Activated naive CD4-positive, alpha-beta T cell treated with anti-CD3 and anti-CD28 coated beads for 36 hours (primary cell): ENCODE measurements at regions of chr3 and their contacts with region 1.

Region 1: GRCh38 chr3:100796556-100796955 is 87.3 kb downstream of the TFG start:
- DNase-seq: no peak
- H3K4me3 Mint-ChIP-seq: peak overlapping the region; percentile 27
- H3K27ac Mint-ChIP-seq: no peak overlapping the region
- H3K4me1 Mint-ChIP-seq: peaks cover 5% of the 10 kb centered on the region
- H3K27me3 Mint-ChIP-seq: no peaks in the 10 kb centered on the region

Region 2: GRCh38 chr3:100463002-100463401 is 333.6 kb before region 1 on chr3:
- CTCF ChIA-PET with region 1: interaction called, 15 read pairs
- intact Hi-C with region 1: loop called (anchors 1 kb)
- DNase-seq: peak; percentile 27
- H3K4me3 Mint-ChIP-seq: no peak overlapping the region
- H3K27ac Mint-ChIP-seq: no peak overlapping the region
- H3K4me1 Mint-ChIP-seq: peaks cover 5% of the 10 kb centered on the region
- H3K27me3 Mint-ChIP-seq: peaks cover 3% of the 10 kb centered on the region

Region 3: DNA sequence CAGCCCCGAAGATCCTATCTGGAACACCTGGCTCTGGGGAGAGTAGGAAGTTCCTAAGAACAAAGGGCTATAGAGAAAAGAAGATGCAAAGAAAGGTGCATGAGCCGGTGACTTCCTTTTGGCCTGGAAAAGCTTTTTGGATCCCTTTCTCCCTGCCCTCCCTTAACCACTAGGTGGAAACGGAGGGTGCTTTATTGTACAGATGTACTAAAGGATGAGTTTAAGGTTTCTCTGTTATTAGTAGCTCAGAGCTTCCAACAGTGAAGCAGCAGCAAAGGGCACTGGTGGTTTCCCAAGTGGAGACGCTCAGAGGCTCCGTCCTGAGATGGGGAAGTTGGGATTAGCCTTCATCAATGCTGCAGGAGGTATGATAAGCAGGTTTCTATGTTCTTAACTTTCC is 193.1 kb before region 1 on chr3:
- CTCF ChIA-PET with region 1: interaction called, 4 read pairs
- intact Hi-C with region 1: loop called (anchors 2 kb)
- DNase-seq: no peak
- H3K4me3 Mint-ChIP-seq: peak overlapping the region; percentile 37
- H3K27ac Mint-ChIP-seq: no peak overlapping the region
- H3K4me1 Mint-ChIP-seq: peaks cover 25% of the 10 kb centered on the region
- H3K27me3 Mint-ChIP-seq: peaks cover 2% of the 10 kb centered on the region

Region 4: GRCh38 chr3:100650651-100651611 is 145.6 kb before region 1 on chr3:
- CTCF ChIA-PET with region 1: interaction called, 3 read pairs
- intact Hi-C with region 1: loop called (anchors 1 kb)
- DNase-seq: peak; percentile 57
- H3K4me3 Mint-ChIP-seq: peak overlapping the region; percentile 30
- H3K27ac Mint-ChIP-seq: peak overlapping the region; percentile 84
- H3K4me1 Mint-ChIP-seq: peaks cover 16% of the 10 kb centered on the region
- H3K27me3 Mint-ChIP-seq: no peaks in the 10 kb centered on the region

Region 5: GRCh38 chr3:100737334-100737733 is 59.2 kb before region 1 on chr3:
- CTCF ChIA-PET with region 1: no interaction called
- intact Hi-C with region 1: loop called (anchors 2 kb)
- DNase-seq: no peak
- H3K4me3 Mint-ChIP-seq: no peak overlapping the region
- H3K27ac Mint-ChIP-seq: no peak overlapping the region
- H3K4me1 Mint-ChIP-seq: no peaks in the 10 kb centered on the region
- H3K27me3 Mint-ChIP-seq: no peaks in the 10 kb centered on the region

Region 6: GRCh38 chr3:101102678-101103296 is 306.2 kb after region 1 on chr3:
- CTCF ChIA-PET with region 1: no interaction called
- intact Hi-C with region 1: no loop called
- DNase-seq: no peak
- H3K4me3 Mint-ChIP-seq: no peak overlapping the region
- H3K27ac Mint-ChIP-seq: no peak overlapping the region
- H3K4me1 Mint-ChIP-seq: no peaks in the 10 kb centered on the region
- H3K27me3 Mint-ChIP-seq: peaks cover 21% of the 10 kb centered on the region